Ascending aorta (tissue), 2 donors: ENCODE measurements at regions of chr7 and their contacts with region 1.

Region 1: DNA sequence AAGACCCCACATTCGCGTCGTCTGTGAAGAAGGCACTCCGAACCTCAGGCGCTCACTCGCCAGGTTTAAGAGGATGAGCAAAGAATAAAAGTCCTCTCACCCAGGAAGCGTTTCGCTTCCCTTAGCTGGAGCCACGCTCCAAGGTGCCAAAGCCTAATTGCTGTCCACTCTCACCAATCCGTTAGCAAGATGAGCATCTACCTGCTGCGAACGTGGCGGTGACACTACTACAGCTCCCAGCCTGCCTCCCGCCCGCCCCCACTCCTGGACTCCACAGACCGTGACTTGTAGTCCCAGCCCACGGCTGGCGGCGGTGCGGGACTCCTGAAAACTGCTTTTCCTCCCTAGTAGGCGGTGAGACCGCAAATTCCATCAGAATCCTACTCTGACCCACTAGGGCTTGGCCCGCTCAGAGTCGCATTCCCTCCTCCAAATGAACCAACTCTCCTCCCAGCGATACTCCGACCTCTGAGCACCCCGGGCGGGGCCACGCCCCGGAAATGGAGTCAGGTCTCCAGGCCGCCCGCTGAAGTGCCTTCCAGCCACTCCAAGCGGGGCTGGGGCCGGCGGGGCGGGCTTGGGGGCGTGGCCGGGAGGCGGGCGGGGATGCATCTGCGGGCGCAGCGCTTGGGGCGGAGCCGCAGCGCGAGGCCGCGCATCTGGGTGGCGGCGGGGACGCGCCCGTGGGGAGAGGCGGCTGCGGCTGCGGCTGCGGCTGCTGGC is 521 bp upstream of the PTPN12 start:
- DNase-seq: peak; percentile 87 to 99
- H3K4me3 ChIP-seq: peak overlapping the region; percentile 96 to 98
- H3K27ac ChIP-seq: peak overlapping the region; percentile 93 to 97
- H3K4me1 ChIP-seq: peaks cover 0 to 23% of the 10 kb centered on the region in 2 donors
- H3K27me3 ChIP-seq: no peaks in the 10 kb centered on the region
- CTCF ChIP-seq: no peak

Region 2: DNA sequence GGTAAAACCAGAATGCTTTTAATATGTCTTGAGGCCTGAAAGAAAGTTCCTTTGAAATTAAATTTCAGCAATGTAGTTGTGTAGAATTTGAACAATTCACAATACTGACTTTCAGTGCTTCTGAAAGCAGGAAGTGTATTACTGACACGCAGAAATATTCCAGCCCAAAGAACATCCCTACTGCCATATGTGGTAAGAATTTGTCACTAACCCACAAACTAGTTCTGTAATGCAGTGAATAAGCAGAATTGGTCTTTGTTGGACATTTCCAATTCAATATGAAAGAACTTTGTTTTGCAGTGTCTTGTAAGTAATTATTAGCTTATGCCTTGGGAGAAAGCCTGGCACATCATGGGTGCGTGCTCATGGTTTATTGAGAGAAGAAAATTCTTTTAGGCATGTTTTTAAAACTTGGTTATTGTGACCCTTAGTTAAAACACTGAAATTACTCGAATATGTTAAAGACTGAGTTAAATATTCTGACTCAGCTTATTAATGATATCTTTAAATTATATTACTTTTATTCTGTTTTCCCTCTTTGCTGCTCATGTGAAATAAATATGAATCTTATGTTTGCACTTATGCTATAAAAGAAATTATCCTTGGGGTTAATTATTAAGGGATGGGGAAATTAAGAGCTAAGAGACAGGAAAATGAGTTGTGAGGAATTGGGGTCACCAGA is 33.9 kb after region 1 on chr7:
- intact Hi-C with region 1: loop called (anchors 5 kb)
- DNase-seq: no peak
- H3K4me3 ChIP-seq: no peak overlapping the region
- H3K27ac ChIP-seq: no peak overlapping the region
- H3K4me1 ChIP-seq: peaks cover 0 to 5% of the 10 kb centered on the region in 2 donors
- H3K27me3 ChIP-seq: no peaks in the 10 kb centered on the region
- CTCF ChIP-seq: no peak

Region 3: DNA sequence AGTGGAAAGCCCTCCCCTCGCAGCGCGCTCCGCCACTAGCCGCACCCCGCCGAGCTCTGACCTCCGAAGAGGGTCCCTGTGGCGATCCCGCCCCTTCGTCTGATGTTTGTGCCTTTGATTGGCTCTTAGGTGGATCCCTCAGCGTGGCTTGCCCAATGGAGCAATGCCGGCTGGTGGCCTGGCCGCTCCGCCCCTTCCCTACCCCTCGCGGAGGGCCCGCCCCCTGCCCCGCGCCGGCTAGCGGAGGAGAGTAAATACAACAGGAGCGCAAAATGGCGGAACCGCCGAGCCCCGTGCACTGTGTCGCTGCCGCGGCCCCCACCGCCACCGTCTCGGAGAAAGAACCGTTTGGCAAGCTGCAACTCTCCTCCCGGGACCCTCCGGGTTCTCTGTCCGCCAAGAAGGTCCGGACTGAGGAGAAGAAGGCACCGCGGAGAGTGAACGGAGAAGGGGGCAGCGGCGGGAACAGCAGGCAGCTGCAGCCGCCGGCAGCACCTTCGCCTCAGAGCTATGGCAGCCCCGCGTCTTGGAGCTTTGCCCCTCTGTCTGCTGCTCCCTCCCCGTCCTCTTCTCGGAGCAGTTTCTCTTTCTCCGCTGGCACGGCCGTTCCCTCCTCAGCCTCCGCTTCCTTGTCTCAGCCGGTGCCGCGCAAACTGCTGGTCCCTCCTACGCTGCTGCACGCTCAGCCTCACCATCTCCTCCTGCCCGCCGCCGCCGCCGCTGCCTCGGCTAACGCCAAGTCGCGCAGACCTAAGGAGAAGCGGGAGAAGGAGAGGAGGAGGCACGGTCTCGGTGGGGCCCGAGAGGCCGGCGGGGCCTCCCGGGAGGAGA is 159.8 kb after region 1 on chr7 and contains the start of gene RSBN1L:
- intact Hi-C with region 1: loop called (anchors 1 kb)
- DNase-seq: peak; percentile 97 to 99
- H3K4me3 ChIP-seq: peak within 1 kb of the TSS; percentile 95 to 98
- H3K27ac ChIP-seq: peak within 1 kb of the TSS; percentile 93 to 98
- H3K4me1 ChIP-seq: peaks cover 0 to 16% of the 10 kb centered on the region in 2 donors
- H3K27me3 ChIP-seq: no peaks in the 10 kb centered on the region
- CTCF ChIP-seq: peak; percentile 38 to 49 (median 44)
- total RNA-seq, gene RSBN1L: 12.8 TPM

Region 4: DNA sequence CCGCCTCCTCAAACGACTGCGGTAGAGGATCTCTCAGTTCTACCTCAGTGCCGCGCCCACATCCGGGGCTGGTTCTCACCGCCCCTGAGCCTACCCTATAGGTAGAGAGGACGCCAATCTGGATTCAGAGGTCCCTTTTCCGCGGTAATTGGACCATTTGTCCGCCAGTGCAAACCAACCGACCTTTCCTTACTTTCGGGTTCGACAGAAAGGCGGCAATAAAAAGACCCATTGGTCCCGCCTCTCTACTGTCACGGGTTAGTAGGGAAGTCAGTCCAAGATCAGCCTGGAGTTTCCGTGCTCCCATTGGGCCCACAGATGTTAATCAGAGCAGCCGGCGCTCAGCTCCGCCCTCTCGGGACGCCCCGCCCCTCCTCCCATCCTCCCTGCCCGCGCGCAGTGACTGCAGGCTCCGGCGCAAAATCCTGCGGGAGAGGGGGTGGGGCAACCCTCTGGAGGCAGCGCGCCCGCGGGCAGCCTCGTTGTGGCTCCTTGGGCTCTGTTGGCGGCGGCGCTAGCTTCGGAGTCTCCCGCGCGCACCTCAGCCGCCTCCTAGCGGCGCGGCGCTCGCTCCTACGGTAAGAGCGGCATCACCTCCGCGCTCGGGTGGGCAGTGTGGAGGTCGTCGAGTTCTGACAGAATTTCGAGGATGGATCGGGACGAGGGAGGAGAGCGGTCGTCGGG is 262.0 kb after region 1 on chr7 and contains the starts of genes PHTF2 and TMEM60:
- intact Hi-C with region 1: loop called (anchors 2 kb)
- DNase-seq: peak; percentile 97 to 99
- H3K4me3 ChIP-seq: peak within 1 kb of the TSS; percentile 88 to 90
- H3K27ac ChIP-seq: peak within 1 kb of the TSS; percentile 91 to 97
- H3K4me1 ChIP-seq: peaks cover 4 to 8% of the 10 kb centered on the region in 2 donors
- H3K27me3 ChIP-seq: no peaks in the 10 kb centered on the region
- CTCF ChIP-seq: peak; percentile 39 to 54 (median 48)
- total RNA-seq, gene PHTF2: 10.2 TPM
- total RNA-seq, gene TMEM60: not detected

Region 5: DNA sequence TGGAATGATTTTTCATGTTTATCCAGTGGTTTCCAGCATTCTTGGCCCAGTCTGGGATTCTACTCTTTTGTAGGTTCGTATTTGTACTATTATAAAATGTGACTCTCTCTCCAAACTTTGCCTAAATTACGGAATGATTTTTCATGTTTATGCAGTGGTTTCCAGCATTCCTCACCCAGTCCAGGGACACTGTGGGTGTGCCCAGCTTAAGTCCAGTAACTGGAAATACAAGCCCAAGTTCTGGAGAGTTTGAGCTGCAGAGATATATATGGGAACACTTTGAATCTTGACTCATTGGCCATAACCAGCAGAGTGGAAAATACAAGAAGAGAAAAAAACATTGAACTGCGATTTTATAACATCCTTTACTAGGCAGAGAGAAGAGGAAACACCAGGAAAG is 1922.8 kb after region 1 on chr7:
- intact Hi-C with region 1: loop called (anchors 5 kb)
- DNase-seq: peak in 1 of 2 donors; percentile 75
- H3K4me3 ChIP-seq: no peak overlapping the region
- H3K27ac ChIP-seq: peak overlapping the region; percentile 67 to 76
- H3K4me1 ChIP-seq: peaks cover 4 to 23% of the 10 kb centered on the region in 2 donors
- H3K27me3 ChIP-seq: no peaks in the 10 kb centered on the region
- CTCF ChIP-seq: no peak